Posterior vena cava (tissue), 2 donors: ENCODE measurements at regions of chr9 and their contacts with region 1.

Region 1: GRCh38 chr9:75238311-75238978 is 150.1 kb downstream of the OSTF1 start:
- DNase-seq: no peak

Region 2: DNA sequence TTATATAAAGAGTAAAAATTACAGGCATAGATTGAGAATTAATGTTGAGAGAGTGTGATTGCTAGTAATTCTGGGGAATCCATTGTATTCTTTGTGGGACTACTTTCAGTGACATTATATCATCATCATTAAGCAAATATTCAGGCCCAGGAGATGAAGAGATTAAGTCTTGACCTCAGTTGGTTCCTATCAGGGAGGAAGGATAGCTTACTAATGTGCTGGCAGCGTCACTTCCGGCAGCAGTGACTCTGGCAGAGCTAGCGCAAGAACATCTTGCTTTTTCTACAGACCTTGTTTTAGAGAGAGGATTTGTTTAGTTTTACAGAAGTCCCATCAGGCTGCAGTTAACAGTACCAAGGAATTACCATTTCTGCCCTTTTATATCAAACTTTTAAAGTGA is 129.9 kb before region 1 on chr9:
- intact Hi-C with region 1: no loop called
- DNase-seq: peak; percentile 88

Region 3: DNA sequence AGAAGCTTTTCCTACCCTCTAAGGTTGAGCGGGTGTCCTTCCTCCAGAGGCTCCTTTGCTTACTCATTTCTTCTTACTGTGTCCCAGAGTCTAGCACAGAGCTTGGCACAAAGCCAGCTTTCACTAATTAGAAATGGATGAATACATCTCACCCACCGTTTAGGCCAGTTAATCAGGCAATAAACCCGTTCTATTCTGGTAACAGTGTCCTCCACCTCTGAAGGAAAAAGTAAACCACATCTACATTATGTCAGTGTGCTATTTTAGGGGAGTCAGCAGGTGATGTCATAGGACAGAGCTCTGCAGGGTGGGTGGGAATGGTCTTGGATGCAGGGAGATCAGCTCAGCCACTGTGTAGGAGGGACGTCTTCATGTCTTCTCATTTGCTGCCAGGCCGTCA is 40.9 kb before region 1 on chr9:
- intact Hi-C with region 1: loop called in 1 of 2 experiments (anchors 5 kb)
- DNase-seq: no peak

Region 4: GRCh38 chr9:75289332-75289731 is 50.9 kb after region 1 on chr9:
- intact Hi-C with region 1: no loop called
- DNase-seq: no peak